ENCODE measurements at regions of chr3 and their contacts with region 1.

Region 1: GRCh38 chr3:186930641-186931531 is 560 bp downstream of the ST6GAL1 start:
- DNase-seq: peak; percentile 86
- H3K4me3 Mint-ChIP-seq: peak overlapping the region; percentile 83
- H3K27ac Mint-ChIP-seq: peak overlapping the region; percentile 87
- H3K4me1 Mint-ChIP-seq: peaks cover 30% of the 10 kb centered on the region
- H3K27me3 Mint-ChIP-seq: peaks cover 4% of the 10 kb centered on the region

Region 2: GRCh38 chr3:186746008-186746407 is 184.9 kb before region 1 on chr3:
- CTCF ChIA-PET with region 1: no interaction called
- DNase-seq: peak; percentile 28
- H3K4me3 Mint-ChIP-seq: no peak overlapping the region
- H3K27ac Mint-ChIP-seq: no peak overlapping the region
- H3K4me1 Mint-ChIP-seq: peaks cover 4% of the 10 kb centered on the region
- H3K27me3 Mint-ChIP-seq: peaks cover 10% of the 10 kb centered on the region

Region 3: GRCh38 chr3:186783073-186783730 is 147.7 kb before region 1 on chr3 and contains the start of gene EIF4A2:
- CTCF ChIA-PET with region 1: no interaction called
- DNase-seq: peak; percentile 91
- H3K4me3 Mint-ChIP-seq: peak within 1 kb of the TSS; percentile 93
- H3K27ac Mint-ChIP-seq: peak within 1 kb of the TSS; percentile 97
- H3K4me1 Mint-ChIP-seq: peaks cover 47% of the 10 kb centered on the region
- H3K27me3 Mint-ChIP-seq: peaks cover 16% of the 10 kb centered on the region

Region 4: DNA sequence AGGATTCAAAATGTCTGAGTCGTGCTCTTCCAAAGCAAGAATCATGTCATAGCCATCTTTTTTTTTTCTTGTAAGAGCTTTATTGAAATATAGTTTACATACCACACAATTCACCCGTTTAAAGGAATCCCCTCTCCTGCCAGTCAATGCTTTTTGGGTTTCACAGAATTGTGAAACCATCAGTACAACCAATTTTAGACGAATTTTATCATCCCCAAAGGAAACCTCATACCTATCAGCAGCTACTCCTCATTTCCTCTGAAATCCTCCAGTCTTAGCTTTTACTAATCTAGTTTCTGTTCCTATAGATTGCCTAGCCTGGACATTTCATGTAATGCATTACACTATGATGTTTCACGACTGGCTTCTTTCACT is 48.7 kb before region 1 on chr3:
- CTCF ChIA-PET with region 1: interaction called, 10 read pairs
- DNase-seq: no peak
- H3K4me3 Mint-ChIP-seq: no peak overlapping the region
- H3K27ac Mint-ChIP-seq: peak overlapping the region; percentile 21
- H3K4me1 Mint-ChIP-seq: peaks cover 47% of the 10 kb centered on the region
- H3K27me3 Mint-ChIP-seq: no peaks in the 10 kb centered on the region

Region 5: GRCh38 chr3:187066228-187066995 is 135.5 kb after region 1 on chr3:
- CTCF ChIA-PET with region 1: interaction called, 12 read pairs
- DNase-seq: peak; percentile 68
- H3K4me3 Mint-ChIP-seq: no peak overlapping the region
- H3K27ac Mint-ChIP-seq: peak overlapping the region; percentile 55
- H3K4me1 Mint-ChIP-seq: peaks cover 52% of the 10 kb centered on the region
- H3K27me3 Mint-ChIP-seq: no peaks in the 10 kb centered on the region